Calu3 (cell line): ENCODE measurements at regions of chr19 and their contacts with region 1.

Region 1: DNA sequence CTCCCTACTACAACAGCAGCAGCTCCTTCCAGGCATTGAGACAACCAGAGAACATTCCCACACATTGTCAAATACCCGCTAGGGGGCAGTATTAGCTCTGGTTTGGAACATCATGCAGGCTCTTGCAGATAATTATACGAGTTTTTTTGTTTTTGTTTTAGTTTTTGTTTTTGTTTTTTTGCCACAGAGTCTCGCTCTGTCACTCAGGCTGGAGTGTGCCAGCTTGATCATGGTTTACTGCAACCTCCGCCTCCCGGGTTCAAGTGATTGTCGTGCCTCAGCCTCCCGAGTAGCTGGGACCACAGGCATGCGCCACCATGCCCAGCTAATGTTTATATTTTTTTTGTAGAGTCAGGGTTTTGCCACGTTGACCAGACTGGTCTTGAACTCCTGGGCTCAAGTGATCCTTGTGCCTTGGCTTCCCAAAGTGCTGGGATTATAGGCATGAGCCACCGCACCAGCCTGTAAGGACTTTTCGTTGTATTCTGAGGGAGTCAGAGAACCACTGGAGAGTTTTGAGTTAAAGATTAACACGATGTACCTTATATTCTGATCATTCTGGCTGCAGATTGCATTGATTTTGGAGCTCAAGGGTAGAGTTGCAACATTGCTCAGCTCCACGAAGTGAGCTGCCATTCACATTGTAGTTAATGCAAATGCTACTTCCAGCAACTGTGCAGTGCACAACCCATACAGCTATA is 41.7 kb upstream of the CEACAM20 start:
- DNase-seq: peak; percentile 86
- H3K4me3 Mint-ChIP-seq: peak overlapping the region; percentile 29
- H3K27ac Mint-ChIP-seq: peak overlapping the region; percentile 8
- H3K4me1 Mint-ChIP-seq: peaks cover 42% of the 10 kb centered on the region
- H3K27me3 Mint-ChIP-seq: no peaks in the 10 kb centered on the region
- CTCF ChIP-seq: peak; percentile 88

Region 2: DNA sequence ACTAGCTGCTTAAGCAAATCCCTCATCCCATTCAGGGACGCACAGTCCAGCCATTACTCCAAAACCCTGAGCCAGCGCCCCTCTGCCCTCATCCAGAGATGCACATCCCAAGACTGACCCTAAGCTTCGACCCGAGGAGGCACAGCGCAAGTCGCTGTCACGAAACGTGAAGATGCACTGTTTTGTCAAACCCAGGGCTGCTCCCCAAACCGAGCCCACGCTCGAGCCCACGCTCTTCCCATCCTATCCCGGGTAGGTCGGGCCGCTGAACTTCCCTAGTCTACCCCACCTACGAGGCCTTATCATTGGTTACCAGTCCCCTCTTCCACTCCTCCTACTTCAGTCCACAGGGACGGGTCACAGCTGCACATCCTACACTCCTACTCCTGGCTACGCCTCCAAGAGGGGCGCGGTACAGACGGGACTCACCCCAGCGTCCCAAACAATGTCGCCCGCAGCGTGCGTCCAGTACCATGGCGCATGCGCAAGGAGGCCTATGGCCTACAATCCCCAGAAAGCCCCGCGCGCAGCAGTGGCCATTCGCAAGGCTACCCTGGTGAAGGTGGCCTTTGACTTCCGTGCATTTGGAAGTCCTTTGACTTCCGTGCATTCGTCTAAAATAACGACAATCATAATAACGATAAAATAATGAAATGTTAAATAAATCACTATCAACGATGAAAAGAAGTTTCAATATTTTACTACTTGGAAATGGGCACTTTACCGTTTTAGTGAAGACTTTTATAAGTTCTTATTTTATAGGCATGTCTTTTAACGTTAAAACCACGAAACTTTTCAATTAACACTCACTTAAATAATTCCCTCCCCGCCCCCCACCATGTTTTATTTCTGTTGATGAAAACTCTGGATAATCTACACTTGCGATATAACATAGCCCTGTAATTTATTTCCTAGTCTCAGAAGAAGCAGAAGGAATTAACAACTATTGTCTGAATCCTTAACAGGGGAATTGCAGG is 169.7 kb before region 1 on chr19 and contains the start of gene ZNF285:
- CTCF ChIA-PET with region 1: no interaction called
- intact Hi-C with region 1: no loop called
- DNase-seq: peak; percentile 97
- H3K4me3 Mint-ChIP-seq: peak within 1 kb of the TSS; percentile 76
- H3K27ac Mint-ChIP-seq: peak within 1 kb of the TSS; percentile 29
- H3K4me1 Mint-ChIP-seq: no peaks in the 10 kb centered on the region
- H3K27me3 Mint-ChIP-seq: no peaks in the 10 kb centered on the region
- CTCF ChIP-seq: no peak
- total RNA-seq, gene ZNF285: 5.8 and 6.5 TPM in 2 replicates

Region 3: GRCh38 chr19:44512326-44513298 is 58.5 kb before region 1 on chr19:
- CTCF ChIA-PET with region 1: interaction called, 3 read pairs
- intact Hi-C with region 1: loop called (anchors 5 kb)
- DNase-seq: peak; percentile 81
- H3K4me3 Mint-ChIP-seq: no peak overlapping the region
- H3K27ac Mint-ChIP-seq: no peak overlapping the region
- H3K4me1 Mint-ChIP-seq: no peaks in the 10 kb centered on the region
- H3K27me3 Mint-ChIP-seq: peaks cover 39% of the 10 kb centered on the region
- CTCF ChIP-seq: peak; percentile 88

Region 4: GRCh38 chr19:44582581-44583265 is 11.6 kb after region 1 on chr19:
- CTCF ChIA-PET with region 1: interaction called, 11 read pairs
- intact Hi-C with region 1: no loop called
- DNase-seq: peak; percentile 63
- H3K4me3 Mint-ChIP-seq: no peak overlapping the region
- H3K27ac Mint-ChIP-seq: no peak overlapping the region
- H3K4me1 Mint-ChIP-seq: peaks cover 43% of the 10 kb centered on the region
- H3K27me3 Mint-ChIP-seq: no peaks in the 10 kb centered on the region
- CTCF ChIP-seq: peak; percentile 57

Region 5: DNA sequence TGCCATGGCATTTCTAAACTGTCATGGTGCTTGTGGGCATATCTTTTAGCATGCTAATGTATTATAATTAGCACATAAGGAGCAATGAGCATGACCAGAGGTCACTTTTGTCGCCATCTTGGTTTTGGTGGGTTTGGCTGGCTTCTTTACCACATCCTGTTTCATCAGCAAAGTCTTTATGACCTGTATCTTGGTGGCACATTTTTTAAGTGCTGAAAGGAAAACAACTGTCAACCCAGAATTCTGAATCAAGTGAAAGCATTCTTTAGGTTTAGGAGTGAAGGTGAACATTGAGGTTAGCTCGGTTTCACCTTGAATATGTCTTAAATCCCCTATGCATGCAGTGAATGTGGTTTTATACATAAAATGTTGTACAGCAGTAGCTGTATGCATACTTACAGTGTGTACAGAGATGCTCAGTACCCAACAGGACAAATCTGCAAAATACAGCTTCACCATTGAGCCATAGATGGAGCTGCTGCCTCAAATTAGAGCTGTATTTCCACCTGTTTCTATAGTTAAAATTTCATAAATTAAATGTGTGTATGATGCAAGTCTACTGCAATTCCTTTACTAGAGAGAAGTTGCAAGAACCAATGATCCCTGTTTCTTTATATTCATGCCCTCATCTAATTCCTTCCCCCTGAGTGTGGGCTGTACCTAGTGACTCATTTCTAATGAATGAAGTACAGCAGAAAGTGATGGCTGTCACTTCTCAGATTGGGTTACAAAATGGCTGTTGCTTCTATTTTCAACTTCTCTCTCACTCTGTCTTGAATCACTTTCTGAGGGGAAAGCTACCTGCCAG is 17.0 kb after region 1 on chr19:
- CTCF ChIA-PET with region 1: interaction called, 11 read pairs
- intact Hi-C with region 1: no loop called
- DNase-seq: peak; percentile 68
- H3K4me3 Mint-ChIP-seq: peak overlapping the region; percentile 59
- H3K27ac Mint-ChIP-seq: peak overlapping the region; percentile 100
- H3K4me1 Mint-ChIP-seq: peaks cover 75% of the 10 kb centered on the region
- H3K27me3 Mint-ChIP-seq: no peaks in the 10 kb centered on the region
- CTCF ChIP-seq: peak; percentile 19

Region 6: GRCh38 chr19:44653977-44654774 is 83.0 kb after region 1 on chr19:
- CTCF ChIA-PET with region 1: interaction called, 40 read pairs
- intact Hi-C with region 1: no loop called
- DNase-seq: peak; percentile 91
- H3K4me3 Mint-ChIP-seq: peak overlapping the region; percentile 33
- H3K27ac Mint-ChIP-seq: peak overlapping the region; percentile 43
- H3K4me1 Mint-ChIP-seq: peaks cover 73% of the 10 kb centered on the region
- H3K27me3 Mint-ChIP-seq: no peaks in the 10 kb centered on the region
- CTCF ChIP-seq: peak; percentile 88

Region 7: DNA sequence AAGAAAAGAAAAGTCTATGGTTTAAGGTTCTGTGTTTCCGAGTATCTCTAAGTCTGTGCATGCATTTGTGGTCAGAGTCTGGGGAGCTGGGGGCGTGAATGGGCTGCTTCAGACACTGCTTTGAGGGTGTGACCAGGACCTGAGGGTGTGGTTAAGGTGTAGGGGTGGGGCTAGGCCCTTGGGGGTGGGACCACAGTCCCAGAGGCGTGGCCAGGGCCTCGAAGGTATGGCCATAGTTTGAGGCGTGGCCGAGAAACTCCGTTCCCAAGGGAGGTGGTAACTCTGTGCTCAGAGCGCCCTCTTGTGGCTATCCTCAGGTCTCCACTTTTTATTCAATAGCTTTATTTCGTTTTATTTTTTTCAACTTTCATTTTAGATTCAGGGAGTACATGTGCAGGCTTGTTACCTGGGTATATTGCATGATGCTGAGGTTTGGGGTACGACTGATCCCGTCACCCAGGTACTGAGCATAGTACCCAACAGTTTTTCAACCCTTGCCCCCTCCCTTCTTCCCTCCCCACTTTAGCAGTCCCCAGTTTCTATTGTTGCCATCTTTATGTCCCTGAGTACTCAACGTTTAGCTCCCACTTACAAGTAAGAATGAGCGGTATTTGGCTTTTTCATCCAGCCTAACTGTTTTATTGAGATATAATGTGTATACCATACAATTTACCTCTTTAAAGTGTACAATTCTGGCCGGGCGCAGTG is 199.6 kb after region 1 on chr19:
- CTCF ChIA-PET with region 1: interaction called, 13 read pairs
- intact Hi-C with region 1: loop called (anchors 2 kb)
- DNase-seq: peak; percentile 99
- H3K4me3 Mint-ChIP-seq: no peak overlapping the region
- H3K27ac Mint-ChIP-seq: peak overlapping the region; percentile 31
- H3K4me1 Mint-ChIP-seq: peaks cover 37% of the 10 kb centered on the region
- H3K27me3 Mint-ChIP-seq: no peaks in the 10 kb centered on the region
- CTCF ChIP-seq: peak; percentile 87

Region 8: GRCh38 chr19:44845612-44846454 is 274.7 kb after region 1 on chr19 and contains the start of gene NECTIN2:
- CTCF ChIA-PET with region 1: interaction called, 21 read pairs
- intact Hi-C with region 1: no loop called
- DNase-seq: peak; percentile 100
- H3K4me3 Mint-ChIP-seq: peak within 1 kb of the TSS; percentile 66
- H3K27ac Mint-ChIP-seq: peak within 1 kb of the TSS; percentile 73
- H3K4me1 Mint-ChIP-seq: peaks cover 34% of the 10 kb centered on the region
- H3K27me3 Mint-ChIP-seq: no peaks in the 10 kb centered on the region
- CTCF ChIP-seq: peak; percentile 83
- total RNA-seq, gene NECTIN2: 137 and 174 TPM in 2 replicates